Panc1 (cell line): ENCODE measurements at regions of chr16 and their contacts with region 1.

Region 1: DNA sequence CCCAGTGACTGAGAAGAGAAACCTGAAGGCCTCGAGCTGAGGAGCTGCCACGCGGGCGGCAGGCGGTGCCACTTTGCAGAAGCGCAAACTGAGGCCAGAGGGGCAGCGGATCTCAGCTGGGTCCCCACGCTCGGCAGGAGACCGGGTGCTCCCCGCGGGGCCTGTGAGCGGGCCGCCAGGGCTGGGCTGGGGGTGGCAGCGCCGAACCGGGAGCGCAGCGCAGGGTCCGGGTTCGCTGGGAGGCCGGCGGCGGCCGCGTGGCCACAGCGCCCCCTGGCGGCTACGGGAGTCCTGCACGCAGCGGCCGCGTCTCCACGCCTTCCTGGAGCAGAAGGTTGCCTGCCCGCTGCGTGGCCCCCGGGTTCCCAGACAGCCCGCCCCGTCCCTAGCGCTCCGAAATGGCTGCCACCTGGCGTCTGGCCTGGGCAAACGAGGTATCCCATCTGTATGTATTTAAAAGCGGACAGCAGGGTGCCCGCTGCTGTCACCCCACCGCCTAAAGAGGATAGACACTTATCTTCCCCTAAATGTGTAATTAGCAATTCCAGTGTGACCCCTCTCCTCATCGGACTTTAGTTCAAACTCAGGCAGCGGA is 96.1 kb upstream of the CDH5 start:
- DNase-seq: no peak
- ATAC-seq: peak; percentile 82
- H3K4me3 ChIP-seq: no peak overlapping the region
- H3K27ac ChIP-seq: no peak overlapping the region
- H3K4me1 ChIP-seq: no peaks in the 10 kb centered on the region
- H3K27me3 ChIP-seq: no peaks in the 10 kb centered on the region
- CTCF ChIP-seq: peak; percentile 95

Region 2: DNA sequence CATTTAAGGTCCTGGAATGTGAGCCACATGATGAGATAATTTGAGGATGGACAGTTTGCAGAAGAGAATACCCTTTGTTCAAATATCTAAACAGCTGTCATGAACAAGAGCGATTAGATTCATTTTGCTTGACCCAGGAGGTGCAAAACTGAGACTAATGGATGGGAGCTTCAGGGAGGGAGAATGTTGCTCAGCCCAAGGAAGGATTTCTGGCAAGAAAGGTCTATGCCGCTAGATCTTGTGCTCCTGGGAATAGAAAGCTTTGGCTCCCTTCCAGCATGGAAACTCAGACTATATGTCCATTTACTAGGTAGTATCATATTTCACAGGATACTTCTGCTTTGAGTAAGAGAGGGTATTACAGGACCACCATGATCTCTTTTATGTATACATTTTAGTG is 1133.7 kb before region 1 on chr16:
- CTCF ChIA-PET with region 1: no interaction called
- POLR2A ChIA-PET with region 1: no interaction called
- in situ Hi-C with region 1: no loop called
- intact Hi-C with region 1: loop called (anchors 10 kb)
- DNase-seq: no peak
- ATAC-seq: no peak
- H3K4me3 ChIP-seq: no peak overlapping the region
- H3K27ac ChIP-seq: no peak overlapping the region
- H3K4me1 ChIP-seq: no peaks in the 10 kb centered on the region
- H3K27me3 ChIP-seq: no peaks in the 10 kb centered on the region
- CTCF ChIP-seq: no peak